GM12878 (cell line): ENCODE measurements at regions of chr17 and their contacts with region 1.

Region 1: DNA sequence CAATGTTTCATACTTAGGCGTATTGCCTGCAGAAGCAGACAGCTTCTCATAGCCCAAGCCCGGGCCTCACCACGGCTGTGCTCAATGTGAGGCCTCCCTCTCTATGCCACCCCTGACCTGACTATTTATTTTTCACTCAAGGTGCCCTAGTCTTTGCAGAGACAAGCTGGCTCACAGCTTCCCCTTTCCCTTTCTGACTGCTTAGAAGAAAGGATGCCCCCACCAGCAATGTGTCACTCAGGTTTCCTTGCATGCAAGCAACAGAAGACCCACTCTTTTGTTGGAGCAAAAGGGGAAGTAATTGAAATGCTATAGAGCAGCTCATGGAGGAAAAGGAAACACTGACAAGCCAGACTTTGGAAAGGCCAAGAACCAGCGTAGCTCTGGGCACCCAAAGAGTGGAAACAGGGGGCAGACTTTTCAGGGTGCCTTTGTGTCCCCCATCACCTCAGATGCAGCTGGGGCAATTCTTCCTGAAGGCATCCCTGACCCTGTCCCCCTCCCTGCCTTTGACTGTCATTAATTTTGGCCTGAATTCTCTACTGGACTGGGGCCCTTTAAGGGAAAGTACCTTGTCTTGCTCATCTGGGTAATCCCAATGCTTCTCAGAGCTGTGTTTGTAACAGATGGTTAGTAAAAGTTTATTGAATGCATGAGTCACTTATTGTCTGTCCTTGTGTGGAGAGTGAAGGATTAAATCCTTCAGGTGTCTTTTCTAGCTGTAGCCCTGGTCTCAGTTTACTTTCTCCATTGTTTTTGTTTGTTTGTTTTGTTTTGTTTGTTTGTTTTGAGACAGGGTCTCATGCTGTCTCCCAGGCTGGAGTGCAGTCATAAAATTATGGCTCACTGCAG is 17.8 kb downstream of the RGS9 start:
- DNase-seq: no peak
- ATAC-seq: peak; percentile 96
- H3K4me3 ChIP-seq: peak overlapping the region; percentile 9; the same call in 1 of the 2 replicates
- H3K27ac ChIP-seq: peak overlapping the region; percentile 70
- H3K4me1 ChIP-seq: peaks cover 19% of the 10 kb centered on the region
- H3K27me3 ChIP-seq: no peaks in the 10 kb centered on the region
- CTCF ChIP-seq: no peak
- EP300 ChIP-seq: no peak; a peak in 1 of 4 replicates
- POLR2A ChIP-seq: no peak
- RAD21 ChIP-seq: no peak

Region 2: GRCh38 chr17:65137021-65137991 is 17.7 kb before region 1 on chr17 and contains the start of gene RGS9:
- CTCF ChIA-PET with region 1: interaction called, 20 read pairs
- POLR2A ChIA-PET with region 1: no interaction called
- RAD21 ChIA-PET with region 1: interaction called, 6 read pairs
- SMC1A ChIA-PET with region 1: interaction called, 10 read pairs
- in situ Hi-C with region 1: no loop called
- intact Hi-C with region 1: no loop called
- DNase-seq: peak; percentile 38
- ATAC-seq: peak; percentile 98
- H3K4me3 ChIP-seq: peak within 1 kb of the TSS; percentile 66
- H3K27ac ChIP-seq: 0 out of 2 replicates have a peak within 1 kb of the TSS, but pooled peaks have one; percentile 21
- H3K4me1 ChIP-seq: peaks cover 8% of the 10 kb centered on the region
- H3K27me3 ChIP-seq: no peaks in the 10 kb centered on the region
- CTCF ChIP-seq: peak; percentile 83 to 92 (median 89)
- EP300 ChIP-seq: no peak
- POLR2A ChIP-seq: no peak
- RAD21 ChIP-seq: peak; percentile 77
- polyA plus RNA-seq, gene RGS9: 3.0 to 4.1 TPM

Region 3: GRCh38 chr17:65235284-65235683 is 80.3 kb after region 1 on chr17:
- CTCF ChIA-PET with region 1: no interaction called
- POLR2A ChIA-PET with region 1: no interaction called
- RAD21 ChIA-PET with region 1: no interaction called
- SMC1A ChIA-PET with region 1: no interaction called
- in situ Hi-C with region 1: no loop called
- intact Hi-C with region 1: no loop called
- DNase-seq: no peak
- ATAC-seq: no peak
- H3K4me3 ChIP-seq: no peak overlapping the region
- H3K27ac ChIP-seq: no peak overlapping the region
- H3K4me1 ChIP-seq: no peaks in the 10 kb centered on the region
- H3K27me3 ChIP-seq: no peaks in the 10 kb centered on the region; a peak in 1 of 4 replicates
- CTCF ChIP-seq: no peak
- EP300 ChIP-seq: no peak
- POLR2A ChIP-seq: no peak
- RAD21 ChIP-seq: no peak